Heart left ventricle (tissue), 16 donors: ENCODE measurements at regions of chr4 and their contacts with region 1.

Region 1: GRCh38 chr4:6815029-6815836 is 32.7 kb downstream of the KIAA0232 start:
- DNase-seq: no peak
- ATAC-seq: no peak
- H3K4me3 ChIP-seq: no peak overlapping the region
- H3K27ac ChIP-seq: no peak overlapping the region
- H3K4me1 ChIP-seq: peaks cover 0 to 43% (median 12%) of the 10 kb centered on the region in 12 donors
- H3K27me3 ChIP-seq: no peaks in the 10 kb centered on the region
- CTCF ChIP-seq: no peak
- POLR2A ChIP-seq: no peak

Region 2: DNA sequence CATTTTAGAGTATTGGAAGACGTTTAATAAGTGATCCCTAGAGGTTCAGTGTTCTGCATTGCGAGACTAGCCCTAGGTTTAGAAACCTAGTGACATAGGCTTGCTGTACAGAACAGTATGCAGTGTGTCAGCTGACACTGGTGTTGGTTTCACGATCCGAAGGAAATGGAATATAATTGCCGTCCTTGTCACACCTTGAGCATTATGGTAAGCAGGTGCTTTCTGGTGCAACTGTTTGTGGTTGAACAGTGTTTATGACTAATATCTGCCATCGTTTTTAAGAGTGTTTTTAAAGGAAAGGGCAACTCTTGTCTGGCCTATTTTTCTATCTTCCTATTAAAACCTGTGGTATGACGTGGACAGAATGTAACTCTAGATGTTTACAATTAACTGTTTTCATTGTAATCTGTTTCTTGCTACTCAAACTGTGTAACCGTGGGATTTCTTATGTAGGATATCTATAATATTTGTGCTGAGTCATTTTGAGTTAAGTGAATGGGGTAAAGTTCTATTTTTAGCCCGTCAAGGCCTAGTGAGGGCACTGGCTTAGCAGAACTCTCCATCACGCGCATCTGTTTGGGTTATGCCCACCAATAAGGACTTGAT is 40.6 kb after region 1 on chr4:
- intact Hi-C with region 1: loop called in 1 of 10 experiments (anchors 5 kb)
- DNase-seq: peak in 1 of 5 donors; percentile 42
- ATAC-seq: peak; percentile 76 to 87 (median 82)
- H3K4me3 ChIP-seq: peak overlapping the region in 8 of 12 donors; percentile 10 to 36 (median 18)
- H3K27ac ChIP-seq: peak overlapping the region; percentile 50 to 91 (median 80)
- H3K4me1 ChIP-seq: peaks cover 0 to 47% (median 23%) of the 10 kb centered on the region in 12 donors
- H3K27me3 ChIP-seq: no peaks in the 10 kb centered on the region
- CTCF ChIP-seq: no peak
- POLR2A ChIP-seq: no peak